PC-9 (cell line): ENCODE measurements at regions of chr1 and their contacts with region 1.

Region 1: DNA sequence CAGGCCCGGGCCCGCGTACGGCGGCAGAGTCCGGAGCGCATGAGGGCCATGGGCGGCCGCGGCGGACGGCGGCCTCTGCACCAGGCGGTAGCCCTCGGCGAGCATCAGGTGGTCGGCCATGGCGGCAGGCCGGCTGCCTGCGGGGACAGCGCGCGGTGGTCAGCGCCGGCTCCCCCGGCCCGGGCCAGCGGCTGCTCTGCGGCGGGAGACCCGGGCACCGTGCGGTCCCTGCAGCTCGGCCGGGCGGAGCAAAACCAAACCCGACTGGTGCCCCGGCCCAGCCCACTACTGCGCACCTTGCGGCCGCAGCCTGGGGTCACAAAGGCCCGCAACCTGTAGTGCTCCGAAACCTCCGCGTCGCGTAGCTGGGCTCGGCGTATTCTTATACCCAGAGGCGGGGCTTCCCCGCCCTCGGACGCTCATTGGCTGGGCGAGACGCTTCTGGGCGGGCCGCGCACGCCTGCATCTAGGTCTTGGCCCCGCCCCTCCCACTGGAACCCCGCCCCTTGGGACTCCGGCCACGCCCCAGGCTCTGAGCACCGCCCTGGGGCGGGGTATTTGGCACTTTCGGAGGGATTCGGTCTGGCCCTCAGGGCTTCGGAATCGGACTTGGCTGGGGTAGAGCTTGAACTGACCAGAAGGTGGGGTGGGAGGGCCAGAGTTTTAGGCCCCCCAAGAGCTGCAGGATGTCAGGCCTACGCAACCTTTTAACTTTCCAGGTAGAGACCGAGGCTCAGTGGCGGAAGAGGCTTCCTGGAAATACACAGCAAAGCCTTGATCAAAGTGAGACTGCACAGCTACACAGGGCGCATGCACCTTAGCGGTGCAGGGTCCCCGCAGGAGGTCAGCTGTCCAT is at the start of gene CITED4:
- DNase-seq: peak; percentile 87 to 99
- H3K4me3 ChIP-seq: peak within 1 kb of the TSS; percentile 89
- H3K27ac ChIP-seq: peak within 1 kb of the TSS; percentile 52
- H3K4me1 ChIP-seq: peaks cover 60% of the 10 kb centered on the region
- H3K27me3 ChIP-seq: no peaks in the 10 kb centered on the region
- CTCF ChIP-seq: peak; percentile 49
- total RNA-seq, gene CITED4: 67.5 and 98.2 TPM in 2 replicates

Region 2: GRCh38 chr1:39936724-39937491 is 925.3 kb before region 1 on chr1:
- CTCF ChIA-PET with region 1: no interaction called
- POLR2A ChIA-PET with region 1: no interaction called
- intact Hi-C with region 1: no loop called
- DNase-seq: no peak
- H3K4me3 ChIP-seq: no peak overlapping the region
- H3K27ac ChIP-seq: no peak overlapping the region
- H3K4me1 ChIP-seq: peaks cover 21% of the 10 kb centered on the region
- H3K27me3 ChIP-seq: no peaks in the 10 kb centered on the region
- CTCF ChIP-seq: no peak

Region 3: GRCh38 chr1:40107290-40108262 is 754.7 kb before region 1 on chr1:
- CTCF ChIA-PET with region 1: no interaction called
- POLR2A ChIA-PET with region 1: interaction called, 10 read pairs
- intact Hi-C with region 1: no loop called
- DNase-seq: peak; percentile 79 to 99
- H3K4me3 ChIP-seq: peak overlapping the region; percentile 34; the same call in 1 of the 2 replicates
- H3K27ac ChIP-seq: peak overlapping the region; percentile 87
- H3K4me1 ChIP-seq: peaks cover 64% of the 10 kb centered on the region
- H3K27me3 ChIP-seq: no peaks in the 10 kb centered on the region
- CTCF ChIP-seq: no peak

Region 4: DNA sequence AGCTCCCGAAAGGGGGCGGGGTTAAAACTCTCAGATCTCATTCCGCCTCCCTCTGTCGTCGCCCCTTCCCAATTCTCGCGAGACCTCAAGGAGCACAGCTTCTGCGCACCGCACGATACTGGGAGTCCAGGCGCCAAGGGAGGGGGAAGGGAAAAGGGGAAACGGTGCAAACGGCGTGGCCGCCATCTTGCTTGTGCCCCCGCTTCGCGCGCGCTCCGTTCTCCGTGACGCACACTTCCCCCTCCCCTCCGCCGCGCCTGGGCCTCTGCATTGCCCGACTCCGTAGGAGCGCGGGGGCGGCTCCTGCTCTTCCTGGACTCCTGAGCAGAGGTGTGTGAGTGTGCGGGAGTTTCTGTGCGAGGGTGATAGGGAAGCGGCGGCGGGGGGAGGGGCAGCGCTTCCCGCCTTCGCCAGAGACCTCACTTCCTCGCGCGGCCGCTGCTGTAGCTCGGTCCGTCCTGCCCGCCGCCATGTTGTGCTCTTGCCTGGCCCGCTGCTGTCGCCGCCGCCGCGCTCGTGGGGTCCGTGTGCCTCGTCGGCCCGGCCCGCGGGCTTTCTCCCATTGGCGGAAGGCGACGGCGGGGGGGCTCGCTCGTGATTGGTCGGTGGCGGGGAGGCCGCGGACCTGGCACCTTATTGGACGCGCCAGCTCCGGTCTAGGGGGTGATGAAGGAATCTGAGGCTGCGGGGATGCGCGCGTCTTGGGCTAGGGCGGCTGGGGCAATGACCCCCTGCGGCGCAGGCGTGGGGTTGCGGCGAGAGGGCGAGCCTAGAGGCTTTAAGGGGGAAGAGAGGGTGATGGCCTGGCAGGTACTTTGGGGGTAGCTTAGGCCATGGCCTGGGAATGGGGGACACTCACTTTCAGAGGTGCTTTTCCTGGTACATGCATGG is 170.5 kb before region 1 on chr1 and contains the start of gene NFYC:
- CTCF ChIA-PET with region 1: no interaction called
- POLR2A ChIA-PET with region 1: no interaction called
- intact Hi-C with region 1: no loop called
- DNase-seq: peak; percentile 96 to 98
- H3K4me3 ChIP-seq: peak within 1 kb of the TSS; percentile 74
- H3K27ac ChIP-seq: peak within 1 kb of the TSS; percentile 95
- H3K4me1 ChIP-seq: peaks cover 22% of the 10 kb centered on the region
- H3K27me3 ChIP-seq: no peaks in the 10 kb centered on the region
- CTCF ChIP-seq: no peak
- total RNA-seq, gene NFYC: 79.4 and 91.1 TPM in 2 replicates

Region 5: DNA sequence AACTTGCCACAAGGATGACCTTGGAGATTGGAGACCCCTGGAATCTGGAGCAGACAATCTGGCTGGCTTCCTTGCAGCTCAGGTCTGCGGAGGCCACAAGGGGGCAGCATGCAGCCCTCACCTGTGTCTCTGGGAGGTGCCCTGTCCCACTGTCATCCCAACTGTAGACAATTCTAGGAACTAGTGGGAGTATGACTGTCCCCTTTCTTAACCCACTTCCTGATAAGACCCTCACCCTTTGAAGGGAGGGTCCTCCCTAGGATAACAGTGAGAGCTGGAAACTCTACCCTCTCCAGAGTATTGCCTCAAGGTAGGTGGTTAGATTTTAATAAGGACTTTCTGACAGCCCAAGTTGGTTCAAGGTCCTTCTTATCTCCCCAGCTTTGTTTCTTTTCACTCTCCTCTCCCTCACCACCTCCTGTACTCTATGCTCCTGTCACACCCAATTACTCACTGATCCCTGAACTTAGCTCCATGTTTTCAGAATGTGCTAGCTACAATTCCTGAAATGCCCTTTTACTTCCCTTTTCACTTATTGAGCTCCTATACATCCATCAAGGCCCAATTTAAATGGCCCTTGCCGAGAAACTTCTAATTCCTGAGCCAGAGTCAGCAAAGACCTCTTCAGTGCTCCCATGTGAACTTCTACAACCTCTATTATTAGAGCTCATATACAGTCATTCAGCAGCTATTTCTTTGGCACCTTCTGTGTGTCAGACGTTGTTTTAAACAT is 87.8 kb before region 1 on chr1:
- CTCF ChIA-PET with region 1: no interaction called
- POLR2A ChIA-PET with region 1: no interaction called
- intact Hi-C with region 1: no loop called
- DNase-seq: peak; percentile 38 to 68
- H3K4me3 ChIP-seq: no peak overlapping the region
- H3K27ac ChIP-seq: no peak overlapping the region
- H3K4me1 ChIP-seq: no peaks in the 10 kb centered on the region
- H3K27me3 ChIP-seq: no peaks in the 10 kb centered on the region
- CTCF ChIP-seq: peak; percentile 87

Region 6: GRCh38 chr1:40898431-40898901 is 36.2 kb after region 1 on chr1:
- CTCF ChIA-PET with region 1: interaction called, 8 read pairs
- POLR2A ChIA-PET with region 1: interaction called, 27 read pairs
- intact Hi-C with region 1: loop called (anchors 1 kb)
- DNase-seq: peak; percentile 79 to 91
- H3K4me3 ChIP-seq: peak overlapping the region; percentile 39; the same call in 1 of the 2 replicates
- H3K27ac ChIP-seq: peak overlapping the region; percentile 97
- H3K4me1 ChIP-seq: peaks cover 74% of the 10 kb centered on the region
- H3K27me3 ChIP-seq: no peaks in the 10 kb centered on the region
- CTCF ChIP-seq: no peak

Region 7: GRCh38 chr1:40944841-40945430 is 82.7 kb after region 1 on chr1:
- CTCF ChIA-PET with region 1: interaction called, 31 read pairs
- POLR2A ChIA-PET with region 1: interaction called, 18 read pairs
- intact Hi-C with region 1: no loop called
- DNase-seq: no peak
- H3K4me3 ChIP-seq: no peak overlapping the region
- H3K27ac ChIP-seq: no peak overlapping the region
- H3K4me1 ChIP-seq: peaks cover 27% of the 10 kb centered on the region
- H3K27me3 ChIP-seq: no peaks in the 10 kb centered on the region
- CTCF ChIP-seq: no peak

Region 8: GRCh38 chr1:41003640-41004220 is 141.5 kb after region 1 on chr1:
- CTCF ChIA-PET with region 1: interaction called, 15 read pairs
- POLR2A ChIA-PET with region 1: interaction called, 4 read pairs
- intact Hi-C with region 1: no loop called
- DNase-seq: peak; percentile 93 to 96
- H3K4me3 ChIP-seq: no peak overlapping the region
- H3K27ac ChIP-seq: no peak overlapping the region
- H3K4me1 ChIP-seq: peaks cover 13% of the 10 kb centered on the region
- H3K27me3 ChIP-seq: no peaks in the 10 kb centered on the region
- CTCF ChIP-seq: peak; percentile 62